ENCODE measurements at regions of chr6 and their contacts with region 1.

Region 1: GRCh38 chr6:1596088-1596852 is 13.4 kb upstream of the FOXC1 start:
- DNase-seq: peak; percentile 69 to 78 (median 76)
- ATAC-seq: peak; percentile 90
- H3K4me3 ChIP-seq: no peak overlapping the region
- H3K27ac ChIP-seq: no peak overlapping the region
- H3K4me1 ChIP-seq: peaks cover 8% of the 10 kb centered on the region
- H3K27me3 ChIP-seq: no peaks in the 10 kb centered on the region
- CTCF ChIP-seq: peak; percentile 87 to 97 (median 94)
- POLR2A ChIP-seq: no peak

Region 2: DNA sequence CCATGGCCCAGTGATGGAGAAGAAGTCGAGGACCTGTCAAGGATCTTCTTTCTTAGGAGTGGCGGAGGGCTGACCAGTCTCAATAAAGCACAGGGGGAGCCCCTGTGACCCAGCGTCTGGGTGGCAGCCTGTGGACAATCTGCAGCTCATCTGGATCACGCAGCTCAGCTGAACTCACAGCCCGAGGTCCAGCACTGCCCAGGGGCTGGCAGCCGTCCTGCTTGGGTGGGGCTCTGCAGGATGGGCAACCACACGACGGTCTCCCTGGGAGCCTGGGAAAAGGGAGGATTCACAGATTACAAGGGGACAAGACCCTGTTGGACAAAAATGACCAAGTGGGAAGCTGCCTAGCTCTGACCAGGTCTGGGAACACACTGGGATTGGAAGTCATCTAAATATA is 1043.6 kb after region 1 on chr6:
- intact Hi-C with region 1: loop called (anchors 5 kb)
- DNase-seq: no peak
- ATAC-seq: no peak
- H3K4me3 ChIP-seq: no peak overlapping the region
- H3K27ac ChIP-seq: no peak overlapping the region
- H3K4me1 ChIP-seq: peaks cover 4% of the 10 kb centered on the region
- H3K27me3 ChIP-seq: no peaks in the 10 kb centered on the region
- CTCF ChIP-seq: no peak
- POLR2A ChIP-seq: no peak

Region 3: GRCh38 chr6:2749969-2750600 is 1153.8 kb after region 1 on chr6:
- intact Hi-C with region 1: loop called (anchors 5 kb)
- DNase-seq: peak; percentile 60 to 74 (median 68)
- ATAC-seq: peak; percentile 67
- H3K4me3 ChIP-seq: no peak overlapping the region
- H3K27ac ChIP-seq: no peak overlapping the region
- H3K4me1 ChIP-seq: peaks cover 4% of the 10 kb centered on the region
- H3K27me3 ChIP-seq: no peaks in the 10 kb centered on the region
- CTCF ChIP-seq: peak; percentile 67 to 94 (median 76)
- POLR2A ChIP-seq: no peak

Measured in body of pancreas (tissue), 4 donors.